ENCODE measurements at regions of chr14 and their contacts with region 1.

Region 1: DNA sequence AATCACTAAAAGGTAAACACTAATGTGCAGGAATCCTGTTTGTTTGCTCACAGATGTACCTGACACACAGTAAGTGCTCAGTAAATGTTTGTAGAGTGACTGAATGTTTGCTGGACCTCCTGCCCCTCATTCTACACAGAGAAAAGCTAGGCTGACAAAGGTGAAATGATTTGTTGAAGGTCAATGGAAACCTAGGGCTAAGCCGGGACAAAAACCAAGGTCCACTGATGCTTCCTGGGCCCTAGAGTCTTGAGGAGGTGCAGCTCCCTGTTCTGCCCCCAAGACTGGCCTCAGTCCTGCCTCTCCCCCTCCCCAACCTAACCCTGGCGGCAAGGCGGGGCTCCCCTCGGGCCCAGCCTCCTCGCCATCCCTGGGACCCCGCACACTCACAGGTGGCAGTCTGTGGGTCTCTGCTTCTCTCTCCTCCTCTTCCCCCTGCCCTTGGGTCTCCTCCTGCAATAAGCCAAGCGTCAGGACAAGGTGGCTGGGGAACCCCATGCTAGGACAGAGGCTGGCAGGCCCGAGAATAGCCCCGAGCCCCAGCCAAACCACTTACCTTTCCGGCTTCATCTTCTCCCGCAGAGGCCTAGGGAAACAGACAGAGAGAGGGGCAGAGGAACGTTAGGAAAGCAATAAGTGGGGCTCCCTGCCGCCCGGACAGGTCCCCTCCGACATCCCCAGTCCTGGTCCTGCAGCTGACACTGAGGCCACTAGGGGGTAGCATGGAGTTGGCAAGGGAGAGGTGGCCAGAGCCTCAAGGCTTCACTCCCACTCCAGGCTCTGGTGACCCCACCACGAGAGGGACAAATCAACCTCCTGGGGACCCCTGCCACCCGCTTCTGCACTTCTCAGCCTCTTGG is 9.3 kb downstream of the PGF start:
- DNase-seq: peak; percentile 83

Region 2: DNA sequence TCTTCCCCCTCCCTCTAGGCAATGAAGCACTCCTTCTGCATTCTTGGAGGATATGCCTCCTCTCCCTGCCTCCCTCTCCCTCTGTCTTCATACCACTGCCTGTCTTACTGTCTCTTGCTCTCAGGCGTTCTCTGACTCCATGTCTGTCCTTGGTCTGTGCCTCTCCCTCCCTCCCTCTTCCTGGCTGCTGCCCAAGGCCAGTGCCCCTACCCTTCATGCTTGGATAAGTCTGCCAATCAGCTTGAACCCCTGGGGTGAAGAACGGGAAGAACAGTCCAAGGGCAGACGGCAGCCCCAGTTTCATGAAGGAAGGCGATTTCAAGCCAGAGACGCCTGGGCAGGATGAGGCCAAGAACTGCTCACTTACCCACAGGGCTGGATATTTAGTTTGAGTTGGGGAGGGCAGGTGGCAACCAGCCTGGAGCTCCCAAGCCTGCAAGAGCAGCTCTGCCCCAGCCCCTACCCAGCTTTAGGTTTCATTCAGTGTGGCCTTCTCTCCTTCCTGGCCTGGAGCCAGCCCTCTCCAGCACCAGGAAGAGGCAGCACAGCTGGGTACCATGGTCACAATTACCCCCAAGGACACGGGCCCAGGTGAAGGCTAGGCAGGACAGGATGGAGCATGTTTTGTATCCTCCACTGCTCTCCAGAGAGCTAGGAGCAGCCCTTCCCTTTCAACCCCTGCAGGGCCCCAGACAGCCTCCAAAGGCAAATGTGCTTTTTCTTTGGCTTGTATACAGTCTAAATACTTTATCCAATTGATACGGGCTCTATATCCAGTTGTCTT is 298.2 kb before region 1 on chr14:
- CTCF ChIA-PET with region 1: no interaction called
- POLR2A ChIA-PET with region 1: no interaction called
- DNase-seq: no peak

Region 3: DNA sequence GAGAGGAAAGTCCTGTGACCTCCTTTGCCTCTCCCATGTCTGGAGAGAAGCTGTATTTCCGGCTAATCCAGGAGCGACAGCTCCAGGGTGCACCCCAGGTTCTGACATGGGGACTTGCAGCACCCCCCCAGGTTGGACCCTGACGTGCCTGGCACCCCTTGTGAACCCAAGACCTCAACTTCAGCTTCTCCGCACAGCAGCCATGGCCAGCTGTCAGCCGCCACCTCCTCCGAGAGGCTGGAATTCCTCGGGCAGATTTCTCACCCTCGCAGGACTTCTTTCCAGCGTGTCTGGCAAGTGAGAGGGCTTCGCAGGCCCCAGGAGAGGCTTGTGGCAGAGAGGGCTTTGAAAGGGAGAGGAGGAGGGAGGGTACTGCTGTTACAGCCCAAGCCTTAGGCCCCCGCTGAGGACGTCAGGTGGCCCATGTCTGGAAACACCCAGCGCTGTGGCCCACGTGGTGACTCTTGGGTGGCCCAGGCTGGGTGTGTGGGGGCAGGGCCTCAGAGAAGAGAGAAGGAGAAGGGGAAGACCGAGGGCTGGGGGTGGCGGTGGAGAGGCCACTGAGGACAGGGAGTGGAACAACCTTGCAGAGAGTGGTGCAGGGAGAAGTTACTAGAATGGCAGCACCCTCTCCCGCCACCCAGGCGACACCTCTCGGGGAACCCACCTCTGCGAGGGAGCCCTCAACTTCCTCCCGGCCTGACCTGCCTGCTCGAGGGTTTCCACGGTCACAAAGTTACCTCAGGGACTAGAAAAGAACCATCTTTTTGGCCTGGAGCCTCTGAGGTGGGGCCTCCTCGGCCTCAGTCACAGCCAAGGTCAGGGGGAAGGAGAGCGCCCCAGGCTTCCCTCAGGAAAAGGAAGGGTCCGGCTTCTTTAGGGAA is 11.3 kb before region 1 on chr14:
- CTCF ChIA-PET with region 1: interaction called, 16 read pairs
- POLR2A ChIA-PET with region 1: interaction called, 4 read pairs
- DNase-seq: no peak

Region 4: GRCh38 chr14:74979442-74980361 is 33.6 kb after region 1 on chr14:
- CTCF ChIA-PET with region 1: interaction called, 13 read pairs
- POLR2A ChIA-PET with region 1: no interaction called
- DNase-seq: peak; percentile 27

Region 5: GRCh38 chr14:75002392-75003249 is 56.6 kb after region 1 on chr14 and contains the start of gene EIF2B2:
- CTCF ChIA-PET with region 1: interaction called, 5 read pairs
- POLR2A ChIA-PET with region 1: interaction called, 11 read pairs
- DNase-seq: peak; percentile 97

Region 6: GRCh38 chr14:75088574-75089373 is 142.7 kb after region 1 on chr14:
- CTCF ChIA-PET with region 1: interaction called, 10 read pairs
- POLR2A ChIA-PET with region 1: no interaction called
- DNase-seq: peak; percentile 59